ENCODE measurements at regions of chr18 and their contacts with region 1.

Region 1: GRCh38 chr18:26176134-26176533 is 42.5 kb downstream of the PSMA8 start:
- DNase-seq: no peak
- H3K4me3 ChIP-seq: no peak overlapping the region
- H3K27ac ChIP-seq: peak overlapping the region; percentile 96
- H3K4me1 ChIP-seq: peaks cover 71% of the 10 kb centered on the region
- CTCF ChIP-seq: no peak

Region 2: DNA sequence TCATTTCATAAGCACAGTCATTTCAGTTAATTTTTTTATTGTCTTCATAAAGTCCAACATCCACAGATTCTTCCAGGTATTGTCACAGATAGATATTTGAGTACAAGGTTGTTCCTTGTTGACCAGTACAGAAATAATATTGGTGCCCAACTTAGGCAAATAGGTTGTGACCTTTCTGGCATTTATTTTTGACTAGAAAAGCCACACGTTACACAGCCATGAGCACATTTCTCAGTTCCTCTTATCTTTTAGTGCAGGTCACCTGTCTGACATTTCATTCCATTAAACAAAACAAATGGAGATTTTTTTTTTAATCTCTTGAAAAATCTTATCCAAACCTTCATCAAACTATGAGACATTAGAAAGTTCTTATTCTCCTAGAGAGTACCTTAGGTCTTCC is 1253.0 kb before region 1 on chr18:
- CTCF ChIA-PET with region 1: no interaction called
- POLR2A ChIA-PET with region 1: no interaction called
- intact Hi-C with region 1: loop called (anchors 10 kb)
- DNase-seq: peak; percentile 84
- H3K4me3 ChIP-seq: peak overlapping the region; percentile 55
- H3K27ac ChIP-seq: peak overlapping the region; percentile 95
- H3K4me1 ChIP-seq: peaks cover 78% of the 10 kb centered on the region
- CTCF ChIP-seq: no peak

Region 3: DNA sequence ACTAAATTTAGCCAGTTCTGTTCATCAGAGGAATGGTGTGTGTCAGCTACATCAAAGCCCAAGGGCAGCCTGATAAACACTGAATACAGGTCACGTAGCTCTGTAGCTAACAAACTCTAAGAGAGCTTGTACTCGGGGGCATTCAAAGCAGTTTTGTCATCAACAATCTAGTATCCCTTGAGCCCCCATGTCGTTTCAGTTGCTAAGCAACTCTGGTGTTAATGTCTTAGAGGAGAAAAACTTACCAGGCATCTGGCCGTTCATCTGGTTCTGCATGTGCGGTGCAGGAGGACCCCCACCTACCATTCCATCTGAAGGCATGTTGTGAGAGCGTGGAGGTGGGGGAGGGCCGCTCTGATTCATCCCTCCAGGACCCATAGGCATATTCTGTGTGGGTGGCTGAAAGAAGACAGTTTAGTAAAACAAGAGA is 118.8 kb before region 1 on chr18:
- CTCF ChIA-PET with region 1: no interaction called
- POLR2A ChIA-PET with region 1: no interaction called
- intact Hi-C with region 1: no loop called
- DNase-seq: no peak
- H3K4me3 ChIP-seq: no peak overlapping the region
- H3K27ac ChIP-seq: no peak overlapping the region
- H3K4me1 ChIP-seq: peaks cover under 1% of the 10 kb centered on the region
- CTCF ChIP-seq: no peak

Region 4: GRCh38 chr18:26159353-26159752 is 16.8 kb before region 1 on chr18:
- CTCF ChIA-PET with region 1: interaction called, 4 read pairs
- POLR2A ChIA-PET with region 1: interaction called, 62 read pairs
- intact Hi-C with region 1: no loop called
- DNase-seq: peak; percentile 51
- H3K4me3 ChIP-seq: peak overlapping the region; percentile 32
- H3K27ac ChIP-seq: no peak overlapping the region
- H3K4me1 ChIP-seq: peaks cover 33% of the 10 kb centered on the region
- CTCF ChIP-seq: peak; percentile 81

Region 5: GRCh38 chr18:26164571-26164970 is 11.6 kb before region 1 on chr18:
- CTCF ChIA-PET with region 1: interaction called, 4 read pairs
- POLR2A ChIA-PET with region 1: interaction called, 62 read pairs
- intact Hi-C with region 1: no loop called
- DNase-seq: no peak
- H3K4me3 ChIP-seq: no peak overlapping the region
- H3K27ac ChIP-seq: no peak overlapping the region
- H3K4me1 ChIP-seq: peaks cover 45% of the 10 kb centered on the region
- CTCF ChIP-seq: no peak

Region 6: GRCh38 chr18:26190506-26190905 is 14.4 kb after region 1 on chr18:
- CTCF ChIA-PET with region 1: no interaction called
- POLR2A ChIA-PET with region 1: interaction called, 125 read pairs
- intact Hi-C with region 1: loop called (anchors 1 kb)
- DNase-seq: peak; percentile 94
- H3K4me3 ChIP-seq: peak overlapping the region; percentile 56
- H3K27ac ChIP-seq: peak overlapping the region; percentile 99
- H3K4me1 ChIP-seq: peaks cover 55% of the 10 kb centered on the region
- CTCF ChIP-seq: no peak

Region 7: DNA sequence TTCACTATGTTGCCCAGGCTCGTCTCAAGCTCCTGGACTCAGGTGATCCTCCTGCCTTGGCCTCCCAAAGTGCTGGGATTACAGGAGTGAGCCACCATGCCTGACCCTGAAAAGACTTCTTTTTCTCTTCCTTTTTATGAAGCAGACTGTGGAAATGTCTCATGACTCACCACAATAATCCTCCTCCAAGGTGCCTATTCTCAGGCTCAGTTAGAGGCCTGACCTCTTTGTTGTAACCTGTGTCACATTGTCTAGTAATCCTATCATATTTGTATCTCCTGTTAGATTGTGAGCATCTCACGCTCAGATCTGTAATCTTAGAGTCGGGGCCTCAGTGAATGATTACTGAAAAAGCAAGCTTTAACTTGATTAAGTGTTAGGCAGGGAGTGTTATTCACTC is 31.8 kb after region 1 on chr18:
- CTCF ChIA-PET with region 1: no interaction called
- POLR2A ChIA-PET with region 1: no interaction called
- intact Hi-C with region 1: no loop called
- DNase-seq: no peak
- H3K4me3 ChIP-seq: no peak overlapping the region
- H3K27ac ChIP-seq: no peak overlapping the region
- H3K4me1 ChIP-seq: peaks cover 18% of the 10 kb centered on the region
- CTCF ChIP-seq: no peak